MCF 10A (cell line): ENCODE measurements at regions of chr10 and their contacts with region 1.

Region 1: DNA sequence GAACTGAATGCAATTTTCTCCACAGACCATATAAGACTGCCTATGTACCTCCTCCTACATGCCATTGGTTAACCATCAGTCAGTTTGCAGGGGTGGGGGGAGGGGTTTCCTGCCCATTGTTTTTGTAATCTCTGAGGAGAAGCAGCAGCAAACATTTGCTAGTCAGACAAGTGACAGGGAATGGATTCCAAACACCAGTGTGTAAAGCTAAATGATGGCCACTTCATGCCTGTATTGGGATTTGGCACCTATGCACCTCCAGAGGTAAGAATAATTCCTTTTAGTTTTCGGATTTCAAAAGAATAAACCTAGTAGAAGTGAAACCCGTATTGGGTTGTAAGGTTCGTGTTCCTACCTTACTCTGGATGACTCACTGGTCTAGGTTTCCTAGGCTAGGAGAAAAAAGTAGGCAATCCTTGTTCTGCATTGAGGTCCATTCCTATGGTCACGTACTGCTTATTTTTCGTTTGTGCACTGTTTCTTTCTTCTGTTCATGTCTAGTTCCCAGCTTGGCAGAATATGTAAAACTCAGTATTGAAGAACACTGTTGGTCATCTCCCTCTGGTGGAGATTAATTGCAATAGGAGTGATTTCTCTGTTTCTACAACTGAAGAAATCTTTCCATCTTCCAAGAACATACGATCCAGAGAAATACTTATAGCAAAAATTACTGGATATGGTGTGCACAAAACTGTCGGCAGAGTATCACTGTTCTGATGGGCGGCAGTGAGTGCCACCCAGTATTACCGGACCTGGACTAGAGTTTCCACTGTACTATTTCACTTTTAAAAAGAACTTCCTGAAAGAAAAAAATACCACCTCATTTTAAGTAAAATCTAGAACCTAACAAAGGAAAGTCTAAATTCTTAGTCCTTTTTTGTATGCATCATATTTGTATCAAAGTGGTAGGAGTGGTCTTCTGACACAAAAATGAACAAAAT is at the start of gene AKR1C3:
- DNase-seq: peak; percentile 84
- H3K4me3 Mint-ChIP-seq: peak within 1 kb of the TSS; percentile 87
- H3K27ac Mint-ChIP-seq: peak within 1 kb of the TSS; percentile 88
- H3K4me1 Mint-ChIP-seq: peaks cover 20% of the 10 kb centered on the region
- H3K27me3 Mint-ChIP-seq: no peaks in the 10 kb centered on the region
- CTCF ChIP-seq: peak; percentile 43
- total RNA-seq, gene AKR1C3: 22.0 and 22.9 TPM in 2 replicates

Region 2: GRCh38 chr10:5014936-5015335 is 79.6 kb before region 1 on chr10:
- CTCF ChIA-PET with region 1: interaction called, 3 read pairs
- POLR2A ChIA-PET with region 1: interaction called, 5 read pairs
- intact Hi-C with region 1: loop called (anchors 1 kb)
- DNase-seq: peak; percentile 45
- H3K4me3 Mint-ChIP-seq: no peak overlapping the region
- H3K27ac Mint-ChIP-seq: no peak overlapping the region
- H3K4me1 Mint-ChIP-seq: peaks cover 28% of the 10 kb centered on the region
- H3K27me3 Mint-ChIP-seq: no peaks in the 10 kb centered on the region
- CTCF ChIP-seq: peak; percentile 30

Region 3: GRCh38 chr10:5043716-5044115 is 50.8 kb before region 1 on chr10:
- CTCF ChIA-PET with region 1: interaction called, 5 read pairs
- POLR2A ChIA-PET with region 1: interaction called, 13 read pairs
- intact Hi-C with region 1: no loop called
- DNase-seq: peak; percentile 73
- H3K4me3 Mint-ChIP-seq: no peak overlapping the region
- H3K27ac Mint-ChIP-seq: no peak overlapping the region
- H3K4me1 Mint-ChIP-seq: peaks cover 22% of the 10 kb centered on the region
- H3K27me3 Mint-ChIP-seq: no peaks in the 10 kb centered on the region
- CTCF ChIP-seq: no peak

Region 4: DNA sequence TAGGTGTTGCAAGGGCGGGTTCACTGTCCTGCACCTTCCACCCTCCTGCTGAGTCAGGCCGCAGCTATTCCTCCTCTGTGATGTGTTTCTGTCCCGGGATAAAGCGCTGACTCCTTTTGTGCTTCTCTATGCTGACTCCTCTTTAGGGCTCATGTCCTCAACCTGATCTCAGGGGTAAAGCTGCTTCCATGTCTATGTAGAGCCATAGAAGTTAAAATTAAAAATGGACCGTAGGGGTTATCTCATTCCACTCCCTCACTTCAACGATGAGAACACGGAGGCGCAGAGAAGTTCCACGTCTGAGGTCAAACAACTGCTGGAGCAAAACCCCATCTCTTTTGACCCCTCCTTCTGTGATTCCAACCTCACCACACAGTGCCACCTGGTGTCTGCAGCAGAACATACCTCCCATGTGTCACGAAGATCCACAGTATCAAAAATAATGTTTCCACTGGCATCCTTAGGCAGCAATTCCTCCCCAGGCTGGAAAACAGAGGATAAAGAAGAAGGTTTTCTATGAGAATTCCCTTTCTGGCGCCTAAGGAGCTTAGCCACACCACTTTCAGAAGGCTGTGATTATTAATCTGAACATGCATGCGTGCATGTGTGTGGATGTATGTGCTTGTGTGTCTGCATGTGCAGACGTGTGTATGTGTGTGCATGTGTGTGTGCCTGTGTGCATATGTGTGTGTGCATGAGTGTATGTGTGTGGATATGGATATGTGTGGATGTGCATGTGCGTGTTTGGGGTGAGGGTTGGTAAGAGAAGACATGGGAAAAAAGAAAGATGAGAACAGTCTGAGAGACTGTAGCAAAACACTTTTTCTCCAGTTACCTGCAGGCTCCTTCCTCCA is 189.0 kb after region 1 on chr10:
- CTCF ChIA-PET with region 1: interaction called, 20 read pairs
- POLR2A ChIA-PET with region 1: interaction called, 3 read pairs
- intact Hi-C with region 1: loop called (anchors 1 kb)
- DNase-seq: peak; percentile 83
- H3K4me3 Mint-ChIP-seq: peak overlapping the region; percentile 20
- H3K27ac Mint-ChIP-seq: peak overlapping the region; percentile 52
- H3K4me1 Mint-ChIP-seq: peaks cover 20% of the 10 kb centered on the region
- H3K27me3 Mint-ChIP-seq: no peaks in the 10 kb centered on the region
- CTCF ChIP-seq: peak; percentile 55

Region 5: DNA sequence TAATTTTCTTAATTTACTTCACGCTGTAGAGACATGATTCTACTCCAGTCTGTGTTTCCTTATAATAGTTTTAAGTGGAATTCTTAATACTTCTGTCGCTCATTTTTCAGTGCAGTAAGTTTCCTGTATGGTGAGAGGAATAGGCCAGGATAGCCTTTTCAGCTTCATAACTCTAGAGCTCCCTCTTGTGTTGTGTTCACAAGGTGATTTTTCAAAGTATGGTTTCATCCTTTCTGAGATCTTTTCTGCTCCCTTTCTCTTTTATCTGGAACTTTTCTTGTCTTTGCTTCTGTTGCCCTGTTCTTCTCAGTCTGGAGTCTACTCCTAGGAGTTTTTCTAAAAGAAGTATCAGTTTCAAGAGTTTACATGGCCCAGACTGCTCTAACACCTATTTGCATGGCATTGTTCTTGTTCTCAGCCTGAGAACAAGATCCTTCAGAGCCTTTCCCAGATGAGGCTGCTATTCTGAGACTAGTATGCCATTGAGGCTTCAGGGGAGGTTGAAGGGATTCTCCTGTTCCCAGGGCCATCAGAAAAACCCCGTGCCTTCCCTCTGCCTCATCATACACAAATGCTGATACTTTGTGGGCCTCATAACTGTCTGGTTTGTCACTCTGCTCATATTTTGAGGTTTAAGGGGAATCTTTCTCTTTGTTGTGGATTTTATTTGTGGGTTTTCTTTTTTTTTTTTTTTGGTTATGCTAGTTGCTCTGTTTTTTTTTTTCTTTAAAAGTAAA is 339.6 kb after region 1 on chr10:
- CTCF ChIA-PET with region 1: interaction called, 4 read pairs
- POLR2A ChIA-PET with region 1: interaction called, 6 read pairs
- intact Hi-C with region 1: loop called (anchors 1 kb)
- DNase-seq: peak; percentile 64
- H3K4me3 Mint-ChIP-seq: peak overlapping the region; percentile 22
- H3K27ac Mint-ChIP-seq: peak overlapping the region; percentile 75
- H3K4me1 Mint-ChIP-seq: peaks cover 25% of the 10 kb centered on the region
- H3K27me3 Mint-ChIP-seq: no peaks in the 10 kb centered on the region
- CTCF ChIP-seq: peak; percentile 80